GM12878 (cell line): ENCODE measurements at regions of chr21 and their contacts with region 1.

Region 1: DNA sequence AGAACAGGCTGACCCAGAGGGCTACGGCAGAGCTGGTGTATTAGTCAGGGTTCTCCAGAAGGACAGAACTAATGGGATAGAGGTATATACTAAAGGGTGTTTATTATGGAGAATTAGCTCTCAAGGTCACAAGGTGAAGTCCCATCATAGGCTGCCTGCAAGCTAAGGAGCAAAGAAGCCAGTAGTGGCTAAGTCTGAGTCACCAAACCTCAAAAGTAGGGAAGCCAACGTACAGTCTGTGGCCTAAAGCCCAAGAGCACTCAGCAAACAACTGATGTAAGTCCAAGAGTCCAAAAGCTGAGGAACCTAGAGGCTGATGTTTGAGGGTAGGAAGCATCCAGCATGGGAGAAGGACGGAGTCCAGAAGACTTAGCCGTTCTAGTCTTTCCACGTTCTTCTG is 179.2 kb downstream of the BACH1 start:
- DNase-seq: no peak
- ATAC-seq: no peak
- H3K4me3 ChIP-seq: no peak overlapping the region
- H3K27ac ChIP-seq: no peak overlapping the region
- H3K4me1 ChIP-seq: no peaks in the 10 kb centered on the region
- H3K27me3 ChIP-seq: no peaks in the 10 kb centered on the region
- CTCF ChIP-seq: no peak
- EP300 ChIP-seq: no peak
- POLR2A ChIP-seq: no peak
- RAD21 ChIP-seq: no peak

Region 2: GRCh38 chr21:29465546-29465945 is 12.4 kb before region 1 on chr21:
- CTCF ChIA-PET with region 1: interaction called, 14 read pairs
- POLR2A ChIA-PET with region 1: no interaction called
- RAD21 ChIA-PET with region 1: no interaction called
- SMC1A ChIA-PET with region 1: no interaction called
- in situ Hi-C with region 1: no loop called
- intact Hi-C with region 1: no loop called
- DNase-seq: no peak
- ATAC-seq: no peak
- H3K4me3 ChIP-seq: no peak overlapping the region
- H3K27ac ChIP-seq: no peak overlapping the region
- H3K4me1 ChIP-seq: 0 out of 2 replicates have a peak, but pooled peaks cover 1% of the 10 kb centered on the region
- H3K27me3 ChIP-seq: no peaks in the 10 kb centered on the region
- CTCF ChIP-seq: no peak
- EP300 ChIP-seq: no peak
- POLR2A ChIP-seq: no peak
- RAD21 ChIP-seq: no peak

Region 3: DNA sequence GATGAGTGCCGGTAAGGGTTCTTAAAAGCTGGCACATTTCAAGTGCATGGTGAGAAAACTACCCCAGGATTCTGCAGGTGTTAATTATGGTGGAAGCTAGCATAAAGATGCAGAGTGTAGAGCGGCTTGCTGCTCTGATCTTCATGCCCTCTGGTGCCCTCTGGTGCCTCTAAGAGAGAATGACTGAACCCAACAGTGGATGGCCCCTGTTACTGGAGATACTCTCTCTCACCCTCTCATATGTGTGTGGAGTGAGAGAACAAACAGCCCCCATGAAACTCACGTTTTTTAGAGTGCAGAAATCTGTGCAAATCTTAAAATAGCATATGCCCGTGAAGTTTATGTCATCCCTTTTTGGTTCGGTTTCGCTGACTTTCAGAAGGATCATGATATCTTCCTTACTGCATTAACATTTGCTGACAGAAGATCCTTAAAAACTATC is 371.8 kb after region 1 on chr21:
- CTCF ChIA-PET with region 1: interaction called, 45 read pairs
- POLR2A ChIA-PET with region 1: no interaction called
- RAD21 ChIA-PET with region 1: interaction called, 4 read pairs
- SMC1A ChIA-PET with region 1: interaction called, 13 read pairs
- in situ Hi-C with region 1: loop called (anchors 5 kb)
- intact Hi-C with region 1: loop called (anchors 1 kb)
- DNase-seq: peak; percentile 8
- ATAC-seq: peak; percentile 100
- H3K4me3 ChIP-seq: no peak overlapping the region
- H3K27ac ChIP-seq: no peak overlapping the region
- H3K4me1 ChIP-seq: no peaks in the 10 kb centered on the region
- H3K27me3 ChIP-seq: no peaks in the 10 kb centered on the region
- CTCF ChIP-seq: peak; percentile 68 to 83 (median 77); a peak in 5 of 6 replicates
- EP300 ChIP-seq: no peak
- POLR2A ChIP-seq: no peak
- RAD21 ChIP-seq: peak; percentile 90